Right ventricle myocardium inferior (tissue), 1 donor: ENCODE measurements at regions of chr12 and their contacts with region 1.

Region 1: GRCh38 chr12:113334786-113335540 is at the start of gene SLC8B1:
- DNase-seq: peak; percentile 96
- ATAC-seq: peak; percentile 99
- total RNA-seq, gene SLC8B1: 13.3 TPM

Region 2: GRCh38 chr12:113358381-113359132 is 23.6 kb after region 1 on chr12 and contains the start of gene PLBD2:
- intact Hi-C with region 1: loop called (anchors 2 kb)
- DNase-seq: peak; percentile 98
- ATAC-seq: peak; percentile 97
- total RNA-seq, gene PLBD2: 40.3 TPM

Region 3: DNA sequence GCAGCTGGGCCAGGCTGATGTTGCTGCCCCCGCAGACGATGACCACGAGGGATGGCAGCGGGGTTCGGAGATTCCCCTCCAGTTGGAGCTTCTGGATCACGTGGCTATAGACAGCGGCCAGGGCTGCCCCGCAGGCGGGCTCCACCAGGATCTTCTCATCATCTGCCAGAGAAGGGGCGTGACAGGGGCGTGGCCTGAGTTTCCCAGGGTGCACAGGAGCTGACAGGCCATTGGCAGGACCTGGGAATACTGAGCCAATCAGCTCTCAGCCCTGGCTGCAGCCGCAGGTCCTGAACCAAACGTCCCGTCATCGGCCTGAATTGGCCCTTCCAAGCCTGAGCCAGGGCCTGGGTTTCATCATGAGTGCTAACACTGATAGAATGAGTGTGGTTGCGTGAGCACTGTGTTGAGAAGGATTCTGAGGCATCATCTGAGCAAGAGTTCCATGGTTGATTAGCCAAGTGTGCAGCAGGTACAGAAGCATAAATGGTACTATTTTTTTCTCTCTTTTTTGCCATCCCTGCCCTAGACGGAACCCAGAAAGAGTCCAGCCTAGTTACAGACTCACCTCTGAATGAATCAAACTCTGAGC is 58.1 kb after region 1 on chr12:
- intact Hi-C with region 1: no loop called
- DNase-seq: no peak
- ATAC-seq: peak; percentile 20